Naive thymus-derived CD4-positive, alpha-beta T cell (primary cell): ENCODE measurements at regions of chr7 and their contacts with region 1.

Region 1: DNA sequence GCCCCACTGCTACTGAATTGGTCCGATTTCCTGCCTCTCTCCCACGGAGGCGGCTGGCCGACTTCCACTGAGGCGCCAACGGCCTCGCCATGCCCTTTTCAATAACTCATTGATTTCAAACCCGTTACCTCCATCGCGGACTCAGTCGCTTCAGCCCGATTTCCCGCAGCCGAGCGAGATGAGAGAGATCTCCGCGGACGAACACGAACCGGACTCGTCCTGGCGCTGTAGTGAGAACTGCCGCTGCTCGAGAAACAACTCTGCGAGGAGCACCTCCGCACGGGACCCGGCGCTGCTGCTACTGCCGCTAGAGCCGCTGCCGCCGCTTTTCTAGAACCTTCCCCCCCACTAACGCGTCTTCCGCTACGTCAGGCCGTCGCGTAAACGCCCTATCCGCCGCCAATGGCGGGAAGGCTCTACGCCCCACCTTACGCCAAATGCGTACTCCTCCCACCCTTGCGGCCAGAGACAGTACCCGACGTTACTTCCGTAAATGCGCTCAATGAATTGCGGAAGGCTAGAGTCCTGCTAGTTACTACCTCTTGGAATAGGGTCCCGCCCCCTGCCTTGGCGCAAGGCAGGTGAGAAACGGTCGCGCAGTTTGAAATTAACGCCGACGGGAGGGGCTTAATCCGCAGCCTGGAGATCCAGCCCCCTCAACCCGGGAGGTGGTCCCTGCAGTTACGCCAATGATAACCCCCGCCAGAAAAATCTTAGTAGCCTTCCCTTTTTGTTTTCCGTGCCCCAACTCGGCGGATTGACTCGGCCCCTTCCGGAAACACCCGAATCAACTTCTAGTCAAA is at the start of gene HNRNPA2B1:
- DNase-seq: peak; percentile 97 to 100 (median 99)
- ATAC-seq: peak; percentile 84
- H3K4me3 ChIP-seq: peak within 1 kb of the TSS; percentile 99
- H3K4me3 Mint-ChIP-seq: peak within 1 kb of the TSS; percentile 94 to 100 (median 100)
- H3K27ac ChIP-seq: peak within 1 kb of the TSS; percentile 97
- H3K27ac Mint-ChIP-seq: peak within 1 kb of the TSS; percentile 98 to 100 (median 100)
- H3K4me1 ChIP-seq: peaks cover 27 to 35% of the 10 kb centered on the region in 2 donors
- H3K4me1 Mint-ChIP-seq: peaks cover 37 to 60% (median 53%) of the 10 kb centered on the region in 7 donors
- H3K27me3 ChIP-seq: no peaks in the 10 kb centered on the region
- H3K27me3 Mint-ChIP-seq: peaks cover 0 to 9% (median 0%) of the 10 kb centered on the region in 5 donors
- total RNA-seq, gene HNRNPA2B1: 394 to 702 (median 437) TPM

Region 2: GRCh38 chr7:25125137-25125946 is 1075.3 kb before region 1 on chr7 and contains the start of gene CYCS:
- CTCF ChIA-PET with region 1: no interaction called
- POLR2A ChIA-PET with region 1: no interaction called
- intact Hi-C with region 1: loop called in 1 of 2 experiments (anchors 2 kb)
- DNase-seq: peak; percentile 97 to 100 (median 99)
- ATAC-seq: peak; percentile 96
- H3K4me3 ChIP-seq: peak within 1 kb of the TSS; percentile 74
- H3K4me3 Mint-ChIP-seq: peak within 1 kb of the TSS; percentile 88 to 100 (median 100)
- H3K27ac ChIP-seq: peak within 1 kb of the TSS; percentile 93
- H3K27ac Mint-ChIP-seq: peak within 1 kb of the TSS; percentile 98 to 100 (median 100)
- H3K4me1 ChIP-seq: peaks cover 7 to 13% of the 10 kb centered on the region in 2 donors
- H3K4me1 Mint-ChIP-seq: peaks cover 15 to 40% (median 23%) of the 10 kb centered on the region in 7 donors
- H3K27me3 ChIP-seq: no peaks in the 10 kb centered on the region
- H3K27me3 Mint-ChIP-seq: peaks cover 0 to 5% (median 0%) of the 10 kb centered on the region in 5 donors
- total RNA-seq, gene CYCS: 40.4 to 130 (median 114) TPM

Region 3: DNA sequence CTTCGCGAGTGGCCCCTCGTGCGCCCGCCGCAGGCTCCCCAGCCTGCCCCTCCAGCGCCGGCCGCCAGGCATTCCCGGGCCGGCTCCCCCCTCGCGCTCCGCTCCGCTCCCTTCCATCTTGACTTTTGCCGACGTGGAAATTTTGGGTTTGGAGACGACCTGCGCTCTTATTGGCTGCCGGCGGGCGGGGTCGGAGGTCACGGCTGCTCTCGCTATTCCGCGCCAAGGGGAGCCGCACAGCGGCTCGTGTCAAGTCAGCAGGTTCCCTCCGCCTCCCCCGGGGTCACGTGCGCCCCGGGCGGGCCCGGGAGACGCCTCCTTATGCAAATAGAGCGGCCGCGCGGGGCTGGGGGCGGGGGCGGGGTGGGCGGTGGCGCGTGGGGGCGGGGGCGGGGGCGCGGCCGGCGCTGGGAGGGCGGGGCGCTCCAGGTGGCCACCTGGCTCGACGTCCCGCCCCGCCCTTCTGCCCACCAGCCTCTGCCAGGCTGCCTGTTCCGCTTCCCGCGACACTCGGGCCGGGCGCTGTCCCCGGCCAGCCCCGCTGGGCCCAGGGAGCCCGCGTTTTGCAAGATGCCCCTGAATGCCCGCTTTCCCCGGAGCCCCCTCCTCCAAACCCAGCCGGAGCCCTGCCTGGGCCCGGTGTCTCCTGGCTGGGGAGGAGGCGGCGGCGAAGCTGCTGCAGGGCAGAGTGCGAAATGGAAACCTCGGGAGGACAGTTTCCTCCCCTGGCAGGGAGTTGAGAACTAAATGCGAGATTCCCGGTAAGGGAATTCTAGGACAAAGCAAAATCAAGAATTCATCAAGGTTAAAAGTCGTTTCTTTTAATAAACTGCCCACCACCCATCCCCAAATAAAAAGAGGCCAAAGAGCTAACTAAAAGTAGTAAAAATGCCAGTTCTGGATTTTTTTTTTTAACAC is 249.4 kb before region 1 on chr7:
- CTCF ChIA-PET with region 1: no interaction called
- POLR2A ChIA-PET with region 1: interaction called, 5 read pairs
- intact Hi-C with region 1: loop called (anchors 1 to 2 kb)
- DNase-seq: peak; percentile 70 to 94 (median 87)
- ATAC-seq: peak; percentile 99
- H3K4me3 ChIP-seq: peak overlapping the region; percentile 61
- H3K4me3 Mint-ChIP-seq: peak overlapping the region; percentile 87 to 94 (median 92)
- H3K27ac ChIP-seq: peak overlapping the region; percentile 52
- H3K27ac Mint-ChIP-seq: peak overlapping the region in 7 of 9 donors; percentile 45 to 87 (median 81)
- H3K4me1 ChIP-seq: peaks cover 7 to 14% of the 10 kb centered on the region in 2 donors
- H3K4me1 Mint-ChIP-seq: peaks cover 16 to 31% (median 20%) of the 10 kb centered on the region in 7 donors
- H3K27me3 ChIP-seq: no peaks in the 10 kb centered on the region
- H3K27me3 Mint-ChIP-seq: peaks cover 0 to 22% (median 5%) of the 10 kb centered on the region in 5 donors

Region 4: GRCh38 chr7:26112203-26112740 is 88.4 kb before region 1 on chr7:
- CTCF ChIA-PET with region 1: interaction called, 10 read pairs
- POLR2A ChIA-PET with region 1: interaction called, 24 read pairs
- intact Hi-C with region 1: no loop called
- DNase-seq: peak in 4 of 9 donors; percentile 19 to 39 (median 28)
- ATAC-seq: no peak
- H3K4me3 ChIP-seq: no peak overlapping the region
- H3K4me3 Mint-ChIP-seq: peak overlapping the region in 1 of 10 donors; percentile 14
- H3K27ac ChIP-seq: no peak overlapping the region
- H3K27ac Mint-ChIP-seq: no peak overlapping the region
- H3K4me1 ChIP-seq: no peaks in the 10 kb centered on the region
- H3K4me1 Mint-ChIP-seq: peaks cover 2 to 19% (median 13%) of the 10 kb centered on the region in 7 donors
- H3K27me3 ChIP-seq: no peaks in the 10 kb centered on the region
- H3K27me3 Mint-ChIP-seq: peaks cover 0 to 9% (median 4%) of the 10 kb centered on the region in 5 donors

Region 5: DNA sequence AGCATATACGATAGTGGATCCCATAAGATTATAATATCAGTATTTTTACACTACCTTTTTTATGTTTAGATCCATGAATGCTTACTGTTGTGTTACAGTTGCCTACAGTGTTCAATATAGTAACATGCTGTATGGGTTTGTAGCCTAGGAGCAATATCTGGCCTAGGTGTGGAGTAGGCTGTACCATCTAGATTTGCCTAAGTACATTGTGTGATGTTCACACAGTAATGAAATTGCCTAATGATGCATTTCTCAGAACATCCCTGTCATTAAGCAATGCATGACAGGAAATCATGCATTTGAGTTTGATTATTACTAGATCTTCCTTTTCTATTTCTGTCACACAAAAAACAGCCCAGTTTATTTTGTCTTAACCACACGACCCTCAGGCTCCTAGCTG is 15.4 kb after region 1 on chr7:
- CTCF ChIA-PET with region 1: interaction called, 3 read pairs
- POLR2A ChIA-PET with region 1: interaction called, 10 read pairs
- intact Hi-C with region 1: no loop called
- DNase-seq: no peak
- ATAC-seq: no peak
- H3K4me3 ChIP-seq: no peak overlapping the region
- H3K4me3 Mint-ChIP-seq: no peak overlapping the region
- H3K27ac ChIP-seq: no peak overlapping the region
- H3K27ac Mint-ChIP-seq: peak overlapping the region in 1 of 9 donors; percentile 41
- H3K4me1 ChIP-seq: no peaks in the 10 kb centered on the region
- H3K4me1 Mint-ChIP-seq: peaks cover 6 to 14% (median 7%) of the 10 kb centered on the region in 7 donors
- H3K27me3 ChIP-seq: no peaks in the 10 kb centered on the region
- H3K27me3 Mint-ChIP-seq: peaks cover 0 to 6% (median 0%) of the 10 kb centered on the region in 5 donors

Region 6: DNA sequence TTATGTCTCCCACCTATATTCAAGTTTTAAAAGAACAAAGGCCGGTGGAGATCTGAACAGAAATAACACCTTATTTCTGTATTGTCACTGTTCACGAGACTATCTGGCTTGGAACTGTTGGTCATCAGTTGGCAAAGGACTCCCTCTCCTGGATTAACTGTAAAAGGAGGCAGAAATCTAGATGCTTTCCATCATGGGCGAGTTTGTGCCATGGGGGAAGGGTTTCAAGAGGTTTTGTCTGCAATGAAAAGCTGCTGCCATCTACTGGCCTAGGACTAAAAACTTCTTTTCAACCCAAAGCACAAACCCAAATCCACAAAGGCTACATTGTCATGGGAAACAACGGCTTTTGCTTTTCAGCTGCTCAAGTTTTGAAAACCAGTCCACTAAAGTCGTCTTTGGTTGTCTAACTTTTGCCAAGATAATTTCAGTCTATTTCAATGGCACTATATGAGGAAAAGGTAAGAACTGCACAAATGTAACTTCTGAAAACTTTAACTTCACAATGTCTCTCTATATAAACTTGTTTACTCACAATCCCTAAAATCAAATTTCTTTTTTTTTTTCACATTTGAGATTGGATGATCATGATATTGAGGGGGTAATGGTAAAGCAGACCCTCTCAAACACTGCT is 467.0 kb after region 1 on chr7:
- CTCF ChIA-PET with region 1: no interaction called
- POLR2A ChIA-PET with region 1: no interaction called
- intact Hi-C with region 1: loop called (anchors 2 to 5 kb)
- DNase-seq: peak in 8 of 9 donors; percentile 39 to 78 (median 64)
- ATAC-seq: peak; percentile 77
- H3K4me3 ChIP-seq: no peak overlapping the region
- H3K4me3 Mint-ChIP-seq: no peak overlapping the region
- H3K27ac ChIP-seq: no peak overlapping the region
- H3K27ac Mint-ChIP-seq: no peak overlapping the region
- H3K4me1 ChIP-seq: peaks cover 0 to 4% of the 10 kb centered on the region in 2 donors
- H3K4me1 Mint-ChIP-seq: peaks cover 0 to 23% (median 17%) of the 10 kb centered on the region in 7 donors
- H3K27me3 ChIP-seq: no peaks in the 10 kb centered on the region
- H3K27me3 Mint-ChIP-seq: peaks cover 9 to 61% (median 14%) of the 10 kb centered on the region in 5 donors

Region 7: DNA sequence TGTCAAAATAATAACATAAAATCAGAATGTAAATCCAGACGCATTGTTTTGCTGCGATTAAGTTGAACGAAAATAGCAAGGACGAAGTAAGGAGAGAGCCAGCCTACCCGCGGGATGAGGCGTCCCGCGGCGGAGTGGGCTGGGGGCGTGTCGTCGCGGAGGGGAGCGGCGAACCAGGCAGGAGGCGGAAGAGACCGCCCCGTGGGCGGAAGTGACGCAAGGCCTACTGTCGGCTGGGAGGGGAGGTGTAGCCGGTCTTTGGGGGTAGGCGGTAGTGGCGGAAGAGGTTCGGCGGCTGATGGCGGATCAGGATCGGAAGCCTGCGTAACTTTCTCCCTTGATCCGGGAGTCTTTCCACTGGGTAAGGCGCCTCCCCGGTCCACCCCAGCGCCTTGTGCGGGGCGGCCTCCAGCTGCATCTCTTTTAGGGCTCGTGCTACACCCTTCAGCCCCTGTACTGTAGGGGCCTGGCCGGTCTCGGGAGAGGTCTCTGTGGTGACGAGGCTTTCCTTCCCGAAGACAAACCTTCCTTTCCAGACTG is 1539.3 kb after region 1 on chr7 and contains the start of gene TAX1BP1:
- CTCF ChIA-PET with region 1: no interaction called
- POLR2A ChIA-PET with region 1: no interaction called
- intact Hi-C with region 1: loop called (anchors 1 to 2 kb)
- DNase-seq: peak; percentile 92 to 97 (median 95)
- ATAC-seq: peak; percentile 97
- H3K4me3 ChIP-seq: peak within 1 kb of the TSS; percentile 91
- H3K4me3 Mint-ChIP-seq: peak within 1 kb of the TSS; percentile 81 to 99 (median 97)
- H3K27ac ChIP-seq: peak within 1 kb of the TSS; percentile 87
- H3K27ac Mint-ChIP-seq: peak within 1 kb of the TSS; percentile 76 to 99 (median 93)
- H3K4me1 ChIP-seq: peaks cover 6 to 24% of the 10 kb centered on the region in 2 donors
- H3K4me1 Mint-ChIP-seq: peaks cover 27 to 51% (median 44%) of the 10 kb centered on the region in 7 donors
- H3K27me3 ChIP-seq: no peaks in the 10 kb centered on the region
- H3K27me3 Mint-ChIP-seq: peaks cover 0 to 9% (median 0%) of the 10 kb centered on the region in 5 donors
- total RNA-seq, gene TAX1BP1: 69.4 to 111 (median 108) TPM